ENCODE measurements at regions of chr11 and their contacts with region 1.

Region 1: DNA sequence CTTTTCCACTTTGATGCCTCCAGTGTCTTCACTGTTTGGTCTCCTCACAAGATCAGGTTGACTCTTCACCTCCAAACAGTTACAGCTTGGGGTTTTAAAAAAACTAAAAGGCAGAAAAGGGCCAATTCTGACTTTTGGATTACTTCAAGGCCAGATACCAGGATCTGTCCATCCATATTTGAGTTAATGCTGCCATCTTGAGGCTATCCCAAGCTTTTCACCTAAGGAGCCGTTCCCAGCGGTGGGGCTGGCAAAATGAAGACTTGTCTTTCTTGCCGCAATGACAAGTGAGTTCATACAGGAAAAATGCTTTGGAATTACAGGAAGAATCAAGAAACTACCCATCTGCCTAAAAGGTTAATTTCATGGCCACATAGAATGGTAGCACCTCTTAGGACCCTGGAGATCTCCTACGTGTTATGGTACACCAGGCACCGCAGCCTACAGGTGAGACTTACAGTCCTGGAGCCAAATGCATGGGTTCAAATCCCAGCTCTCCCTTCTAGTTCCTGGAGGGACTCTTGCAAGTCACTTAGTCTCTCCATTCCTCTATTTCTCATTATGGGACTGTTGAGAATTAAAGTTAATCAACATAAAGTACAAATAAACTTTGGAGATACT is 6.0 kb upstream of the OR5B21 start:
- DNase-seq: no peak
- ATAC-seq: no peak

Region 2: DNA sequence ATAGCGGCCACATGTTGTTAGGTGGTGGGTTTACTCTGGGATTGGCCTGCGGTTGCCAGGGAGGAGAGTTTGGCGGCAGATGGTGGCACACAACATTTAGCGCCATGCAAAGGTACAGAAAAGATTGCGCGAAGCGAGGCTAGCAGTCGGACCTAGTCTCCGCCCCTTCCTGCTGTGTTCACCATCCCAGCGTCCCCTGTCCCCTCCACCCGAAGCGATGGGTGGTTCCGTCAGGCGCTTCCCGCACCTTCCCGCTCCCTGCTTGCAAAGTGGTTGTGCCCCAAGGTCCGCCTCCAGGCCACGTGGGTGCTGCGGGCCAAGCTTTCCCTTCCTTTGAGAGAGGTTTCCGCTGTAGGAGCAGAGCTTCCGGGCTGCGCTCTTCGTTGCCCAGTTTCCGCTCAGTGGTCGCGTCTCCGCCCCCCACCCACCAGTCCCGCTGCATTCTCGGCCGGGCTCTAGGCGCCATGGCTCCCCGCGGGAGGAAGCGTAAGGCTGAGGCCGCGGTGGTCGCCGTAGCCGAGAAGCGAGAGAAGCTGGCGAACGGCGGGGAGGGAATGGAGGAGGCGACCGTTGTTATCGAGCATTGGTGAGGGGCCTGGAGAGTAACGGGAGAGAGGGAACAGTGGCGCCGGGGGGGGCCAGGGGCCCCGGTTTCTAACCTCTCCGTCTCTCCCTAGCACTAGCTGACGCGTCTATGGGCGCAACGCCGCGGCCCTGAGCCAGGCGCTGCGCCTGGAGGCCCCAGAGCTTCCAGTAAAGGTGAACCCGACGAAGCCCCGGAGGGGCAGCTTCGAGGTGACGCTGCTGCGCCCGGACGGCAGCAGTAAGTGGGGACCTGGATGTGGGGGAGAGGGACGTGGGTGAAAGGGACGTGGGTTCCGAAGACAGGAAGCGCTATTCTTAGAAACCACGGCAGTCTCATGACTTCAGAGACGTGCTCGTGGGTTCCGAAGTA is 772.4 kb before region 1 on chr11 and contains the start of gene SELENOH:
- intact Hi-C with region 1: loop called (anchors 10 kb)
- DNase-seq: peak; percentile 96
- ATAC-seq: peak; percentile 99
- total RNA-seq, gene SELENOH: 72.9 TPM

Region 3: GRCh38 chr11:58391879-58392278 is 122.0 kb before region 1 on chr11:
- intact Hi-C with region 1: no loop called
- DNase-seq: no peak
- ATAC-seq: no peak

Region 4: DNA sequence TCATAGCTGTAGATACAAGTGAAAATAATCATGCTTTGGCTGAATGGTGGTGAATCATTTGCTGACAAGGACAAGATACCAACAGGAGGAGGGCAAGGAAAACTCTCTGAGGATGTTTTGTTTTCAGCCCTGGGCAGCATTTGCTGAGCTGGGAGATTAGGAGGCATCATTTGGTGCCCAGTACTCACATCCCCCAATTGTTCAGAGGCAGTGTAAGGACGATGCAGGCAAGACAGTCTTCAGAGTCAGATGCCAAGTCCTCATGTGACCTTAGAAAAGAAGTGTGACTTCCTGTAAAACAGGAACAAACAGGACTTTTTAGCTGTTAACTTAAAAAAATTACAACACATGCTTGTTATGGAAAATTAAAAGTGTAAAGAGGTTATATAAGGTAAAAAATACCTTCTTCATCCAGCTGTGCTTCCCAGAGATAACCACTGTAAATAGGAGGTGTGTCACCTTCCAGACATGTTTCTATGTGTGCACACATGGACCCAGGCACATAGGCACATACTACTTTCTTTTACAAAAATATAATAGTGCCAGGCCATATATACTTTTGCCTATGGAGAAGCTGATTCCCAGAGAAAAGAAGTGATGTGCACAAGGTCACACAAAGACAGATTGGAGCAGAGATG is 126.6 kb after region 1 on chr11:
- intact Hi-C with region 1: no loop called
- DNase-seq: no peak
- ATAC-seq: peak; percentile 52

Measured in Right ventricle myocardium inferior (tissue), 1 donor.